Cardiac septum (tissue), 1 donor: ENCODE measurements at regions of chr7 and their contacts with region 1.

Region 1: GRCh38 chr7:30983042-30983913 is 19.5 kb downstream of the GHRHR start:
- DNase-seq: peak; percentile 90

Region 2: GRCh38 chr7:30634193-30634626 is 349.1 kb before region 1 on chr7:
- intact Hi-C with region 1: no loop called
- DNase-seq: no peak

Region 3: GRCh38 chr7:31122649-31123058 is 139.4 kb after region 1 on chr7:
- intact Hi-C with region 1: loop called (anchors 1 kb)
- DNase-seq: no peak